ENCODE measurements at regions of chr19 and their contacts with region 1.

Region 1: DNA sequence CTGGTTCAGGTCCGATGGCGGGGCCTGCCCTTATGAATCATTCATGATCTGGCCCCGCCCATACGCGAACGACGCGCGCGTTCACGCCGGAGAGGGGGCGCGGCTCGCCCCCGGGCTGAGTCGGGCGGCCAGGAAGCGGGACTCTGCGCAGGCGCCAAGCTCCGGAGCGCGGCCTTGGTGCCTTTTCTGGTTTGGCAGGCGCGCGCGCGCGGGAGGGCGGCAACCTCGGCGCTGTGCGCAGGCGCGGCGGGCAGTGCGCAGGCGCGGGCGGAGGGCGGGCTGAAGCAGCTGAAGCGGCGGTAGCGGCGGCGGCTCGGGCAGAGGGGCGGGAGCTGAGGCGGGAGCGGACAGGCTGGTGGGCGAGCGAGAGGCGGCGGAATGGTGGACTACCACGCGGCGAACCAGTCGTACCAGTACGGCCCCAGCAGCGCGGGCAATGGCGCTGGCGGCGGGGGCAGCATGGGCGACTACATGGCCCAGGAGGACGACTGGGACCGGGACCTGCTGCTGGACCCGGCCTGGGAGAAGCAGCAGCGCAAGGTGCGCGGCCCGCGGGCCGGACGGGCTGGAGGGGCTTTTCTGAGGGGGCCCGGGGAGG is at the start of gene ACTN4:
- DNase-seq: peak; percentile 98 to 100
- H3K4me3 ChIP-seq: peak within 1 kb of the TSS; percentile 83 to 97
- H3K27ac ChIP-seq: peak within 1 kb of the TSS; percentile 94 to 97
- H3K4me1 ChIP-seq: peaks cover 0 to 27% (median 24%) of the 10 kb centered on the region in 4 donors
- H3K27me3 ChIP-seq: no peaks in the 10 kb centered on the region
- CTCF ChIP-seq: no peak

Region 2: GRCh38 chr19:38527466-38528136 is 119.9 kb before region 1 on chr19:
- intact Hi-C with region 1: no loop called
- DNase-seq: no peak
- H3K4me3 ChIP-seq: no peak overlapping the region
- H3K27ac ChIP-seq: no peak overlapping the region
- H3K4me1 ChIP-seq: no peaks in the 10 kb centered on the region
- H3K27me3 ChIP-seq: peaks cover 0 to 17% of the 10 kb centered on the region in 2 donors
- CTCF ChIP-seq: no peak

Region 3: GRCh38 chr19:38718747-38719543 is 71.5 kb after region 1 on chr19:
- intact Hi-C with region 1: loop called (anchors 5 kb)
- DNase-seq: peak; percentile 75 to 96
- H3K4me3 ChIP-seq: no peak overlapping the region
- H3K27ac ChIP-seq: peak overlapping the region; percentile 72 to 91
- H3K4me1 ChIP-seq: peaks cover 16 to 92% (median 66%) of the 10 kb centered on the region in 4 donors
- H3K27me3 ChIP-seq: no peaks in the 10 kb centered on the region
- CTCF ChIP-seq: peak; percentile 58

Region 4: DNA sequence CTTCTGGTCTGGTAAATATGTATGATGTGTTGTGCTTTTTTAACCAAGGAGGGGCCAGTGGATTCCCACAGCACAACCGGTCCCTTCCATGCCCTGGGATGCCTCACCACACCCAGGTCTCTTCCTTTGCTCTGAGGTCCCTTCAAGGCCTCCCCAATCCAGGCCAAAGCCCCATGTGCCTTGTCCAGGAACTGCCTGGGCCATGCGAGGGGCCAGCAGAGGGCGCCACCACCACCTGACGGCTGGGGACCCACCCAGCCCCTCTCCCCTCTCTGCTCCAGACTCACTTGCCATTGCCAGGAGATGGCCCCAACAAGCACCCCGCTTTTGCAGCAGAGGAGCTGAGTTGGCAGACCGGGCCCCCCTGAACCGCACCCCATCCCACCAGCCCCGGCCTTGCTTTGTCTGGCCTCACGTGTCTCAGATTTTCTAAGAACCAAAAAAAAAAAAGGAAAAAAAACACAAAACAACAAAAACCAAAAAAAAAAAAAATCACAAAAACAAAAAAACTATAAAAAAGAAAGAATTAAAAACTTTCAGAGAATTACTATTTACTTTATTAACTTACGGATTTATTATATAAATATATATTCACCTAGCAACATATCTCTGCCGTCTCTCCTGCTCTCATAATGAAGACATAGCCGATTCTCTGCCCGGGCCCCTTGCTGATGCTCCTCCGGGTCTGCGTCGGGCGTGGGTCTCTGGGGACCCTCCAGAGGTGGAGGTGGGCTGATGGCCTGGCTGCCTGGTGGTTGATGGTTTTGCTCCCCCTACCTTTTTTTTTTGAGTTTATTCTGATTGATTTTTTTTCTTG is 82.4 kb after region 1 on chr19:
- intact Hi-C with region 1: loop called (anchors 5 kb)
- DNase-seq: peak in 1 of 2 donors; percentile 77
- H3K4me3 ChIP-seq: no peak overlapping the region
- H3K27ac ChIP-seq: peak overlapping the region; percentile 72 to 91
- H3K4me1 ChIP-seq: peaks cover 0 to 59% (median 32%) of the 10 kb centered on the region in 4 donors
- H3K27me3 ChIP-seq: no peaks in the 10 kb centered on the region
- CTCF ChIP-seq: peak; percentile 65 to 76

Region 5: DNA sequence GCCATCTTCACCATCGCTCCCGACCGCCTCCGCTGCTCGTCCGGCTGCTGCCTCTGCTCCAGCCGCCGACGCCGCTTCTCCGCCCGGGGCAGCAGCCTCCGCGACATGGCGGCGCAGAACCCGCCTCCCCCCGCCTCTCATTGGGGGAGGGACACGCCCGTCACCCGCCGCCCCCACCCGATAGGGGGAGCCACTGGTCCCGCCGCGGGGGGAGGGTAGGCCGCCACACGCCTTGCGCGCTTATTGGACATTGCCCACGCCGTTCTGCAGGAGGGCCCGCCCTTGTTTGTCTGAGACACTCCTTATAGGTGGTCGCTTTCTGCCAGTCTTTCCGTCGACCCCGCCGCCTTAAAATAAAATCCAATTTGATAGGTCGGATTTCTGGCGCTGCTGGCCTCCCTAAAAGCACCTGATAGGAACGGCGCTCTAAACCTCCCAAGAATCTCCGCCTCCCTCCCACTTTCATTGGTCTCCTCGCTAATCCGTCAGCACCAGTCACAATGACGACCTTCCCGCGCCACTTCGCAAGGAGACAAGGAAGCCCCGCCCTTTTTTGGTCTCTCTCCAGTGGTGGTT is 202.5 kb after region 1 on chr19 and contains the start of gene HNRNPL:
- intact Hi-C with region 1: loop called (anchors 2 kb)
- DNase-seq: peak in 1 of 2 donors; percentile 100
- H3K4me3 ChIP-seq: peak within 1 kb of the TSS; percentile 92 to 95
- H3K27ac ChIP-seq: peak within 1 kb of the TSS; percentile 98 to 100
- H3K4me1 ChIP-seq: peaks cover 0 to 52% (median 39%) of the 10 kb centered on the region in 4 donors
- H3K27me3 ChIP-seq: no peaks in the 10 kb centered on the region
- CTCF ChIP-seq: peak; percentile 37 to 43